ENCODE measurements at regions of chr4 and their contacts with region 1.

Region 1: GRCh38 chr4:17576932-17577665 is at the start of gene LAP3:
- DNase-seq: peak; percentile 96 to 97
- H3K4me3 ChIP-seq: peak within 1 kb of the TSS; percentile 77
- H3K4me3 Mint-ChIP-seq: peak within 1 kb of the TSS; percentile 84
- H3K27ac Mint-ChIP-seq: peak within 1 kb of the TSS; percentile 88
- H3K4me1 ChIP-seq: peaks cover 16% of the 10 kb centered on the region
- H3K4me1 Mint-ChIP-seq: peaks cover 8% of the 10 kb centered on the region
- H3K27me3 ChIP-seq: no peaks in the 10 kb centered on the region
- H3K27me3 Mint-ChIP-seq: no peaks in the 10 kb centered on the region
- CTCF ChIP-seq: no peak
- total RNA-seq, gene LAP3: 62.7 and 65.4 TPM in 2 replicates

Region 2: GRCh38 chr4:17558941-17559708 is 18.0 kb before region 1 on chr4:
- CTCF ChIA-PET with region 1: no interaction called
- POLR2A ChIA-PET with region 1: no interaction called
- intact Hi-C with region 1: loop called (anchors 1 kb)
- DNase-seq: peak in 1 of 2 experiments; percentile 19
- H3K4me3 ChIP-seq: no peak overlapping the region
- H3K4me3 Mint-ChIP-seq: no peak overlapping the region
- H3K27ac Mint-ChIP-seq: peak overlapping the region; percentile 22
- H3K4me1 ChIP-seq: peaks cover 22% of the 10 kb centered on the region
- H3K4me1 Mint-ChIP-seq: peaks cover 11% of the 10 kb centered on the region
- H3K27me3 ChIP-seq: no peaks in the 10 kb centered on the region
- H3K27me3 Mint-ChIP-seq: no peaks in the 10 kb centered on the region
- CTCF ChIP-seq: no peak

Region 3: GRCh38 chr4:17614416-17615299 is 37.6 kb after region 1 on chr4 and contains the start of gene MED28:
- CTCF ChIA-PET with region 1: no interaction called
- POLR2A ChIA-PET with region 1: no interaction called
- intact Hi-C with region 1: loop called (anchors 1 kb)
- DNase-seq: peak; percentile 92 to 93
- H3K4me3 ChIP-seq: peak within 1 kb of the TSS; percentile 85
- H3K4me3 Mint-ChIP-seq: peak within 1 kb of the TSS; percentile 97
- H3K27ac Mint-ChIP-seq: peak within 1 kb of the TSS; percentile 98
- H3K4me1 ChIP-seq: peaks cover 7% of the 10 kb centered on the region; the same call in 1 of the 2 replicates
- H3K4me1 Mint-ChIP-seq: no peaks in the 10 kb centered on the region
- H3K27me3 ChIP-seq: no peaks in the 10 kb centered on the region
- H3K27me3 Mint-ChIP-seq: no peaks in the 10 kb centered on the region
- CTCF ChIP-seq: no peak
- total RNA-seq, gene MED28: 60.5 and 68.0 TPM in 2 replicates

Region 4: GRCh38 chr4:17624821-17625220 is 47.7 kb after region 1 on chr4:
- CTCF ChIA-PET with region 1: no interaction called
- POLR2A ChIA-PET with region 1: no interaction called
- intact Hi-C with region 1: no loop called
- DNase-seq: no peak
- H3K4me3 ChIP-seq: no peak overlapping the region
- H3K4me3 Mint-ChIP-seq: no peak overlapping the region
- H3K27ac Mint-ChIP-seq: no peak overlapping the region
- H3K4me1 ChIP-seq: no peaks in the 10 kb centered on the region
- H3K4me1 Mint-ChIP-seq: no peaks in the 10 kb centered on the region
- H3K27me3 ChIP-seq: no peaks in the 10 kb centered on the region
- H3K27me3 Mint-ChIP-seq: no peaks in the 10 kb centered on the region
- CTCF ChIP-seq: no peak

Region 5: DNA sequence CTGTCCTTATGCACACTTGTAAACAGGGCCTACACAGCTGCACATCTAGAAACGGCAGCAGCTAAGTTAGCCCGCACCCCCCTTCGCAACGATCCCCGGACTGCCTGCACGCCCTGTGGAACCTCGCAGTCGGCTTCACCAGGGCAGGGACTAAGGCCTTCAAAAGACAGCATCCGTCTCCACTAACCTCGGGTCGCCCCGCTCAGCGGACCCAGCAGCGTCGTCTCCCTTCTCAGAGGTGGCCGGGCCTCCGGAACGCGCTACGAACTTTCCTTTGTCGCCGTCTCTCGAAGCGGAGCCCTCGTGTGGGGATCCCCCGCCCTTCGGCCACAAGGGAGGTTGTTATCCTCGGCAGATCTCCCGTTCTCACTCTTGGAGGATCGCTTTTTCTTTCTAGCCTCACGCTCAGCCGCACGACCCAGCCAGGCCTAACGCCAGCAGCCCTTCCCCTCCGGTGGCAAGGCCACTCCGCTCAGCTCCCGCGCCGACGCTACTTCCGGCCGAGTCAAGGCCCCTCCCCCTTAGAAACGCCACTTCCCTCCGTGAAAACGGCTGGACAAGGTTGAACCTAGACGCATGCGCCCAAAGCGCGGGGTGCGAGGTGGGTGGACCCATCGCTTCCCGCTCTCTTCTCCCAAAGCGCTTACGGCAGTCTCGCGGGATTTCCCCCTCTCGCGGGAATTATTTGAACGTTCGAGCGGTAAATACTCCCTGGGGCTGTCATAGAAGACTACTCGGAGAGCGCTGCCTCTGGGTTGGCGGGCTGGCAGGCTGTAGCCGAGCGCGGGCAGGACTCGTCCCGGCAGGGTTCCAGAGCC is 233.4 kb after region 1 on chr4 and contains the starts of genes DCAF16 and NCAPG:
- CTCF ChIA-PET with region 1: no interaction called
- POLR2A ChIA-PET with region 1: interaction called, 4 read pairs
- intact Hi-C with region 1: loop called (anchors 1 kb)
- DNase-seq: peak; percentile 99
- H3K4me3 ChIP-seq: peak within 1 kb of the TSS; percentile 94
- H3K4me3 Mint-ChIP-seq: peak within 1 kb of the TSS; percentile 90
- H3K27ac Mint-ChIP-seq: peak within 1 kb of the TSS; percentile 95
- H3K4me1 ChIP-seq: peaks cover 5% of the 10 kb centered on the region; the same call in 1 of the 2 replicates
- H3K4me1 Mint-ChIP-seq: peaks cover 24% of the 10 kb centered on the region
- H3K27me3 ChIP-seq: no peaks in the 10 kb centered on the region
- H3K27me3 Mint-ChIP-seq: no peaks in the 10 kb centered on the region
- CTCF ChIP-seq: no peak
- total RNA-seq, gene DCAF16: 52.3 and 55.3 TPM in 2 replicates
- total RNA-seq, gene NCAPG: 48.9 and 54.0 TPM in 2 replicates

Measured in Caco-2 (cell line).